RWPE1 (cell line): ENCODE measurements at regions of chr17 and their contacts with region 1.

Region 1: GRCh38 chr17:81034779-81035388 is at the start of gene BAIAP2:
- DNase-seq: peak; percentile 99
- H3K27ac ChIP-seq: peak within 1 kb of the TSS; percentile 98
- CTCF ChIP-seq: no peak

Region 2: DNA sequence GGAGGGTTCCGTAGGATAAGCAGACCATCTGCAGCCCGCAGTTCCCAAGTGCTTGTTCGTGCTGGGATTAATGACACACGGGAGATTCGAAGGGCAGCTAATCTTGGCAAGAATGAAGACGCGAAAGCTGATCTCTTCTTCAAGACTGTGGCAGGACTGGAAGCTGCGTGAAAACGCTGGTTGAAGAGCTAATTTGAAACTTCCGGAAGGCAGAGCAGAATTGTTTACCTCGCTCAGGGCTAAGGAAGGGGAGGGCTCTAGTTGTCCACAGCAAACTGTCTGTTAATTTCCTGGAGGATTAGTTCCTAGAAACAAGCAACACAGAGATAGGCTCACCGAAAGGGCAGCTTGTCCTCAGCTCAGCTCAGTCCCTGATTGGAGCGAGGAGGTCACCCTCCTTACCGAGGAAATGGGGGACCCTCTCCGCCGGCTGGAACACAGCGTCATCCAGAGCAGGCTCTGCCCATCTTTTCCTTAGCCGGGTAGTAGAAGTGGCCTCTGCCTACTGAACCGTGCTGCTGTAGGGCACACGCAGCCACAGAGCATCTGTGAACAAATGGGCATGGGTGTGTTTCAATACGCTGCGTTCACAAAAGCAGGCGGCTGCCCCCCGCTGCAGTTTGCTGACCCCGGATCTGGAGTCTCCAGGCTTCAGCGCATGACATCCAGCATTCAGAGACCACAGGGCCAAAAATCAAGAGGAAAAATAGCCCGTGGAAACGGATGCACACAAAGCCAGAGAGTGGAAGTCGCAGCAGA is 16.7 kb before region 1 on chr17:
- CTCF ChIA-PET with region 1: interaction called, 10 read pairs
- POLR2A ChIA-PET with region 1: no interaction called
- DNase-seq: no peak
- H3K27ac ChIP-seq: peak overlapping the region; percentile 99
- CTCF ChIP-seq: no peak